ENCODE measurements at regions of chr10 and their contacts with region 1.

Region 1: GRCh38 chr10:110273474-110273873 is 31.2 kb downstream of the SMNDC1 start:
- DNase-seq: peak; percentile 65
- ATAC-seq: peak; percentile 57
- H3K4me3 Mint-ChIP-seq: no peak overlapping the region
- H3K27ac Mint-ChIP-seq: peak overlapping the region; percentile 66
- H3K4me1 Mint-ChIP-seq: peaks cover 51% of the 10 kb centered on the region
- H3K27me3 Mint-ChIP-seq: no peaks in the 10 kb centered on the region

Region 2: GRCh38 chr10:110252151-110252550 is 21.3 kb before region 1 on chr10:
- CTCF ChIA-PET with region 1: interaction called, 5 read pairs
- POLR2A ChIA-PET with region 1: interaction called, 7 read pairs
- intact Hi-C with region 1: loop called (anchors 2 kb)
- DNase-seq: no peak
- ATAC-seq: no peak
- H3K4me3 Mint-ChIP-seq: no peak overlapping the region
- H3K27ac Mint-ChIP-seq: no peak overlapping the region
- H3K4me1 Mint-ChIP-seq: peaks cover 39% of the 10 kb centered on the region
- H3K27me3 Mint-ChIP-seq: peaks cover 10% of the 10 kb centered on the region

Region 3: DNA sequence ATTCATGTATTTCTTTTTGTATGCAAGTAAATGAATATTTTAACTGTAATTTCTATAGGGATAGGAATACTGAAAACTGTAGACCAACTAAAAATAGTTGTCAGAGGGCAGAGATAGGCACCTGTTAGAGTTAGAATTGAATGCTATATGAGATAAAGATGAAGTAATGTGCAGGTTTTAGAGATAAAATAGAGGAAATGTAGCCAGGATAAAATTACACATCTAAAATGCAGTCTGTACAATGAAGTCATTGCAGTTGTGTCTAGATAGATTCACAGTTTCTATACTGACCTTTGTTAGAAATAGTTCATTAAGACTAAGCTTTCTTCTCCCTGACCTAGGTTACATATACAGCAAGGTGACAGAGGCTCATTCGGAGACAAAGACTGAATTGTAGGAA is 14.9 kb before region 1 on chr10:
- CTCF ChIA-PET with region 1: interaction called, 17 read pairs
- POLR2A ChIA-PET with region 1: no interaction called
- intact Hi-C with region 1: no loop called
- DNase-seq: no peak
- ATAC-seq: no peak
- H3K4me3 Mint-ChIP-seq: no peak overlapping the region
- H3K27ac Mint-ChIP-seq: no peak overlapping the region
- H3K4me1 Mint-ChIP-seq: peaks cover 9% of the 10 kb centered on the region
- H3K27me3 Mint-ChIP-seq: peaks cover 5% of the 10 kb centered on the region

Region 4: DNA sequence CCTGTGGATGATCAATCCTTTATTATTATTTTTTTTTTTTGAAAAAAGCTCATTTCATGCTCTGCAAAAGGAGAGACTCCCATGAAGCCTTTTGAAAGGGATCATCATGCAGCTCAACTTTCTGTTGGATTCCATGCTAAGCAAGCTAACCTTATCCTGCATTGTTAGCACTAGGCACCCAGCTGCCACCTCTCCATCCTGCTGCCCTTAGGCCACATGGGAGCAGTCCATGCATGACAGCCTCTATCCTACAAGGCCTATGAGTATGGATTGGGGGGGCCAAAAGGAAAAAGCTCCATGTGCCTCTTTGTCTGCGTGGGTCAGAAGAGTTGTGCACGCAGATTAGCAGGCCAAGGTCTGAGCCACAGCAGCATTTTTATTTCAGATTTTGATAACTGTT is 12.0 kb after region 1 on chr10:
- CTCF ChIA-PET with region 1: interaction called, 10 read pairs
- POLR2A ChIA-PET with region 1: interaction called, 13 read pairs
- intact Hi-C with region 1: no loop called
- DNase-seq: no peak
- ATAC-seq: no peak
- H3K4me3 Mint-ChIP-seq: no peak overlapping the region
- H3K27ac Mint-ChIP-seq: no peak overlapping the region
- H3K4me1 Mint-ChIP-seq: peaks cover 1% of the 10 kb centered on the region
- H3K27me3 Mint-ChIP-seq: no peaks in the 10 kb centered on the region